IMR-90 (cell line): ENCODE measurements at regions of chr11 and their contacts with region 1.

Region 1: DNA sequence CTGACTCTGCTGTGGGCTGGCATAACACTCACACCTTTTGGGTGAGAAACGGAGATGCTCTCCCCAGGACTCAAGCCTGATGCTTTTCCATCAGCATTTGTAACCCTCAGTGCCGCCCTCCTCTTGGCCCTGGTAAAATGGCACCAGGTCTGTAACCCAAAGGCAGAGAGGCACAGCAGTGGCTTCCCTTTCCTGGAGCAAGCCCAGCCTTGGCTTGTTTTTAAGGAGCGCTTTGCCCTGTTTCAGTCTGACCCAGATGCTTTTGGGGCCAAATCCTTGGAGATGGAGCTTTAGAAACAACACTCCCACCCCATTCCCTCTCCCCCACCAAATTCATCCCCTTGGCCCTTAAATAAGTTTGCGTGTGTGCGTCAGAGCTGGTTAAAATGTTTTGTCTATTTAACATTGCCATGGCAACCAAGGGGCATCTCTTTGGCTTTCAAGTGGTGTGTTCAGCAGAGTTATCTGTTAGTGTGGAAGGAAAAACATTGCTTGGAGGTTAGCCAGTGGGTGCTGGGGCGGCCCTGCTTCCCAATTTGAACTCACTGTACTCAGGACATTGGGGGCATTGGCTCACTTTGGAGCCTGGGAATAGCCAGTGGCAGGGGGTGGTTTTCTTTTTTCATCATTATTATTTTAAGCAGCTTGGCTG is 134.1 kb downstream of the NAV2 start:
- DNase-seq: peak; percentile 30
- ATAC-seq: no peak
- H3K4me3 ChIP-seq: no peak overlapping the region
- H3K27ac ChIP-seq: no peak overlapping the region
- H3K4me1 ChIP-seq: peaks cover 5% of the 10 kb centered on the region; the same call in 1 of the 2 replicates
- H3K27me3 ChIP-seq: no peaks in the 10 kb centered on the region
- CTCF ChIP-seq: no peak
- POLR2A ChIP-seq: no peak
- RAD21 ChIP-seq: no peak

Region 2: DNA sequence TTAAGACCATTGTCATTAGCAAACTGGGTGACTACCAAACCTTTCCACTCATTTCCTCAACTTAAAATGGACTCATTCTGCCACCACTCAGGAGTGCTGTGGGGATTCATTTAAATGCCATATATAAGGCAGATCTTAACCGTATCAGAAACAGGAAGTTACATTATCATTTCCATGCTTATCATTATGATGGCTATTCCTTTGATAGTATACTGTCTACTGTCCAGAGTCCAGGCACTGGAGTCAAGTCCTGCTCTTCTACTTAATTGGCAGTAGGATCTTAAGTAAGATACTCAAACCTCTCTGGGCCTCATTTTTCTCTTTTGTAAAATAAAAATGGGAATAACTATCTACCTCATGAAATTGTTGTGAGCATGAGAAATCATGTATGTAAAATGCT is 142.6 kb before region 1 on chr11:
- CTCF ChIA-PET with region 1: no interaction called
- POLR2A ChIA-PET with region 1: interaction called, 10 read pairs
- dilution Hi-C with region 1: no loop called
- in situ Hi-C with region 1: no loop called
- intact Hi-C with region 1: no loop called
- DNase-seq: no peak
- ATAC-seq: no peak
- H3K4me3 ChIP-seq: no peak overlapping the region
- H3K27ac ChIP-seq: no peak overlapping the region
- H3K4me1 ChIP-seq: peaks cover 8% of the 10 kb centered on the region
- H3K27me3 ChIP-seq: no peaks in the 10 kb centered on the region
- CTCF ChIP-seq: no peak
- POLR2A ChIP-seq: no peak
- RAD21 ChIP-seq: no peak